ENCODE measurements at regions of chr2 and their contacts with region 1.

Region 1: DNA sequence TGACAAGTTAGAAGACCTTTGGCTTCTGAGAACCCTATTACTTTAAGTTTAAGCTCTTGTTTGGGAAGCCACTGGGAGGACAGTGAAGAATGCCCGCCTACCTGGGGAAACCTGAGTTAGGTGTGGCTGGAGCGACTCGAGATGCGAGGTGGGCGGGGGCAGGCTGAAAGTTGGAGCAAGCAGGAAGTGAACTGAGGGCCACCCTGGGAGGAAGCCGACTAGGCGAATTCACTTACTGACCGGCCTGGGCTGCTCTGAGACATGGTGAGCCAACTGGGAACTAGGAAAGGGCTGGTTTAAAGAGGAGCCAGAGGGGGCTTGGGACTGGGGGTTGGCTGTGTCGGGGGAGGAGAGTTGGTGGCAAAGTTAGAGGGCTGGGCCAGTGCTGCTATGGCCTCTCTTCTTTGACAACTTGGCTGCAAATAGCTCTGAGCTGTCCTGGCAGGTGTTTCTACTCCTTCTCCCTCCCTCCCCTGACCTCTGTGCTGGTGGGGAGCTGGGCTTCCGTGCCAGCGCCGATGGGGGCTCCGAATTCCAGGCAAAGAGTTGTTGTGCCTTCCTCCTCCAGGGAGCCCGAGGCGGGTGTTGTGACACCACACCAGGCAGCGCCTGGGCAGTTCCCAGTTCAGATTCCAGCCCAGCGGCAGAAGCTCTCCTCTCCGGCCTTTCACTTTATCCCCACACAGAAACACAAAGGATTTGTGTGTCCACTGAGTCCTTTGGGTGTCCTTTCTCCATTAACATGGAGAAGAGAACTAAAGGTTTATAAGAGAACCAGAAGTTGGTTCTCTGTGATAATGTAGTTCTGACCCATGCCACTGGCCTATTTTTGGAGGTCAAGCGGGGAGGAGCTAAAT is at the start of gene VAMP8:
- DNase-seq: peak; percentile 66
- ATAC-seq: peak; percentile 82
- H3K4me3 Mint-ChIP-seq: peak within 1 kb of the TSS; percentile 92
- H3K27ac Mint-ChIP-seq: peak within 1 kb of the TSS; percentile 90
- H3K4me1 Mint-ChIP-seq: peaks cover 30% of the 10 kb centered on the region
- H3K27me3 Mint-ChIP-seq: peaks cover 1% of the 10 kb centered on the region
- total RNA-seq, gene VAMP8: 128 to 135 TPM

Region 2: GRCh38 chr2:85561317-85561979 is 16.2 kb before region 1 on chr2 and contains the start of gene GGCX:
- POLR2A ChIA-PET with region 1: interaction called, 30 read pairs
- DNase-seq: peak; percentile 89
- ATAC-seq: peak; percentile 95
- H3K4me3 Mint-ChIP-seq: peak within 1 kb of the TSS; percentile 97
- H3K27ac Mint-ChIP-seq: peak within 1 kb of the TSS; percentile 95
- H3K4me1 Mint-ChIP-seq: peaks cover 24% of the 10 kb centered on the region
- H3K27me3 Mint-ChIP-seq: no peaks in the 10 kb centered on the region
- total RNA-seq, gene GGCX: 24.8 to 26.8 TPM

Region 3: GRCh38 chr2:85589982-85590791 is 12.6 kb after region 1 on chr2:
- POLR2A ChIA-PET with region 1: interaction called, 24 read pairs
- DNase-seq: no peak
- ATAC-seq: no peak
- H3K4me3 Mint-ChIP-seq: no peak overlapping the region
- H3K27ac Mint-ChIP-seq: peak overlapping the region; percentile 56
- H3K4me1 Mint-ChIP-seq: peaks cover 49% of the 10 kb centered on the region
- H3K27me3 Mint-ChIP-seq: no peaks in the 10 kb centered on the region

Region 4: GRCh38 chr2:85628658-85629057 is 51.0 kb after region 1 on chr2:
- POLR2A ChIA-PET with region 1: no interaction called
- DNase-seq: no peak
- ATAC-seq: peak; percentile 88
- H3K4me3 Mint-ChIP-seq: no peak overlapping the region
- H3K27ac Mint-ChIP-seq: peak overlapping the region; percentile 68
- H3K4me1 Mint-ChIP-seq: peaks cover 12% of the 10 kb centered on the region
- H3K27me3 Mint-ChIP-seq: no peaks in the 10 kb centered on the region